Activated CD8-positive, alpha-beta T cell treated with anti-CD3 and anti-CD28 coated beads for 36 hours (primary cell): ENCODE measurements at regions of chr13 and their contacts with region 1.

Region 1: DNA sequence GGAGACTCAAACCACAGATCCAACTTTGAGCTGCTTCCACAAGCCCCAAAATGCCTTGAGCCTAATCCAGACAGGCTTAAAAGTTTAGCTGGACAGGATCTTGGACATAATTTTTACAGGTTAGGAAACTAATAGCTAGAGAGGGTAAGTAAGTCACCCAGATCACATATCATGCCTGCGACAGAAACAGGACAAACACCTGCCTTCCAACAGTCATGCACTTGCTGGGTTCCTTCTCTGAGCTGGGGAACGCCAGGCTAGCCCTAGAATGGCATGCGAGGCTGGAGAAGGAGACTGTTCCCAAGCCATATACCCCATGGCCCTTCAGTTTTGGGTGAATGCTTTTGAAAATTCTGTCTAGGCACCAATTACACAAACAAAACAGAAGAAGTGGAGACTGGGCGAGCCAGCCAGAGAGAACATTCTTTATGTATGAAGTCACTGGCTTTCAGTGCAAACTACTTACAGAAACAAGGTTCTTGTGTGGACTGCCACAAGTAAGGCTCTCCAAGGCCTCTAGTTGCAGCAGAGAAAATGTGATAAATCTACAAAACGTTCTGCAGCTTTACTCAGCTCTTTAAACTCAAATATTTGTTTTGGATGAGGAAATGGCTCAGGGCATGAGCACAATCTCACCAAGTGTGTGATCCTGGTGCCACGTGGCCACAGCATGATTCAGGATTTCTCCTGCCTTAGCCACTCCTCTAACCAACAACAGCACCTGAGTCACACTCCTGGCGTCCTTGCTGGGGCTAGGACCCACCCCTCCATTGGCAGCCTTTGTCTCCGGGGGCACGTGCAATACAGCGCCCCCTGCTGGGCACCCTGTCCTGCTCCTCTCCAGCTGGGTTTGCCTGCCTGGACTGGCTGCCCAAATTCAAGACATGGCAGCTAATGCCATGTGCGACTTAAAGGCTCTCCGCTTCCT is 73.4 kb upstream of the UBL3 start:
- DNase-seq: peak; percentile 79
- ATAC-seq: peak; percentile 97
- H3K4me3 Mint-ChIP-seq: no peak overlapping the region
- H3K27ac Mint-ChIP-seq: no peak overlapping the region
- H3K4me1 Mint-ChIP-seq: peaks cover 15% of the 10 kb centered on the region
- H3K27me3 Mint-ChIP-seq: no peaks in the 10 kb centered on the region
- CTCF ChIP-seq: peak; percentile 94

Region 2: DNA sequence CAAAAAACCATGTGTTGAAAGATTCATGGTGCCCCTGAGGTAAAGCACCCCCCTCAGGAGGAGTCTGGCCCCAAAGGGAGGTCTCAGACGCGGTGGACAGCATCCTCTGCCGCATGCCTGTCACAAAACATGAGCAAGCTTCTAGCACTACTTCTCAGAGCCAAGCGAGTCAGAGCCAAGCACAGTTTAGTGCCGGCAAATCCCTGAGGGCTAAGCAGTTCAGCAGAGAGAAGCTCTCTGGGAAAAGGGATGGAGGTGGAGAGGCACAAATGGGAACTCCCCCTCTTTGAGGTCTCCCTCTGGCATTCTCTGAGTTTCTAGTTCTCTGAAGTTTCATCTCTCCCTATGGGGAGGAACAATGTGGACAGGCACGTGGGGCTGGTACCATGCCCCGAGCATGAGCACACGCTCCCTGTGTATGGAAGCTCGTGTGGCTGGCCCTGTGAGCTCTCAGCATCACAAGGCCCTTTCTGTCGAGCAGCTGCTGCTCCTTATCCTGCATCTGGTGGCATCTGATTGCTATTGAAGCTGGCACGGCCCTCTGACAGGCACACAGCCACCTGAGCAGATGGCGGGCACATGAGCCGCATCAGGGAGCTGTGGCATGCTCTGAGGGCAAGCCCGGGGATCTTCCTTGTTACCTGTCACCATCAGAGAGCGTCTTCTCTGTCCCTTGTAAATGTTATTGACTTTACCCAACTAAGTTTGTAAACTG is 653.4 kb before region 1 on chr13:
- CTCF ChIA-PET with region 1: no interaction called
- POLR2A ChIA-PET with region 1: no interaction called
- intact Hi-C with region 1: no loop called
- DNase-seq: no peak
- ATAC-seq: no peak
- H3K4me3 Mint-ChIP-seq: no peak overlapping the region
- H3K27ac Mint-ChIP-seq: no peak overlapping the region
- H3K4me1 Mint-ChIP-seq: no peaks in the 10 kb centered on the region
- H3K27me3 Mint-ChIP-seq: no peaks in the 10 kb centered on the region
- CTCF ChIP-seq: no peak

Region 3: GRCh38 chr13:29771247-29771646 is 152.6 kb before region 1 on chr13:
- CTCF ChIA-PET with region 1: interaction called, 44 read pairs
- POLR2A ChIA-PET with region 1: no interaction called
- intact Hi-C with region 1: no loop called
- DNase-seq: no peak
- ATAC-seq: peak; percentile 39
- H3K4me3 Mint-ChIP-seq: no peak overlapping the region
- H3K27ac Mint-ChIP-seq: no peak overlapping the region
- H3K4me1 Mint-ChIP-seq: no peaks in the 10 kb centered on the region
- H3K27me3 Mint-ChIP-seq: no peaks in the 10 kb centered on the region
- CTCF ChIP-seq: peak; percentile 74

Region 4: GRCh38 chr13:29850224-29850898 is 73.5 kb before region 1 on chr13 and contains the start of gene UBL3:
- CTCF ChIA-PET with region 1: interaction called, 17 read pairs
- POLR2A ChIA-PET with region 1: no interaction called
- intact Hi-C with region 1: no loop called
- DNase-seq: peak; percentile 96
- ATAC-seq: peak; percentile 91
- H3K4me3 Mint-ChIP-seq: peak within 1 kb of the TSS; percentile 92
- H3K27ac Mint-ChIP-seq: peak within 1 kb of the TSS; percentile 99
- H3K4me1 Mint-ChIP-seq: peaks cover 38% of the 10 kb centered on the region
- H3K27me3 Mint-ChIP-seq: no peaks in the 10 kb centered on the region
- CTCF ChIP-seq: no peak
- total RNA-seq, gene UBL3: 7.2 to 8.1 TPM

Region 5: GRCh38 chr13:29908416-29908815 is 15.4 kb before region 1 on chr13:
- CTCF ChIA-PET with region 1: interaction called, 20 read pairs
- POLR2A ChIA-PET with region 1: interaction called, 3 read pairs
- intact Hi-C with region 1: no loop called
- DNase-seq: no peak
- ATAC-seq: no peak
- H3K4me3 Mint-ChIP-seq: no peak overlapping the region
- H3K27ac Mint-ChIP-seq: no peak overlapping the region
- H3K4me1 Mint-ChIP-seq: peaks cover 11% of the 10 kb centered on the region
- H3K27me3 Mint-ChIP-seq: no peaks in the 10 kb centered on the region
- CTCF ChIP-seq: no peak

Region 6: GRCh38 chr13:29943273-29943672 is 19.5 kb after region 1 on chr13:
- CTCF ChIA-PET with region 1: interaction called, 69 read pairs
- POLR2A ChIA-PET with region 1: no interaction called
- intact Hi-C with region 1: no loop called
- DNase-seq: no peak
- ATAC-seq: no peak
- H3K4me3 Mint-ChIP-seq: no peak overlapping the region
- H3K27ac Mint-ChIP-seq: no peak overlapping the region
- H3K4me1 Mint-ChIP-seq: peaks cover 2% of the 10 kb centered on the region
- H3K27me3 Mint-ChIP-seq: no peaks in the 10 kb centered on the region
- CTCF ChIP-seq: no peak